Thyroid gland (tissue), 4 donors: ENCODE measurements at regions of chr11 and their contacts with region 1.

Region 1: GRCh38 chr11:73393479-73394380 is 17.5 kb downstream of the RELT start:
- DNase-seq: peak; percentile 75
- H3K4me3 ChIP-seq: no peak overlapping the region
- H3K27ac ChIP-seq: no peak overlapping the region
- H3K4me1 ChIP-seq: no peaks in the 10 kb centered on the region
- H3K27me3 ChIP-seq: no peaks in the 10 kb centered on the region
- CTCF ChIP-seq: peak; percentile 14 to 86 (median 78)
- POLR2A ChIP-seq: no peak

Region 2: DNA sequence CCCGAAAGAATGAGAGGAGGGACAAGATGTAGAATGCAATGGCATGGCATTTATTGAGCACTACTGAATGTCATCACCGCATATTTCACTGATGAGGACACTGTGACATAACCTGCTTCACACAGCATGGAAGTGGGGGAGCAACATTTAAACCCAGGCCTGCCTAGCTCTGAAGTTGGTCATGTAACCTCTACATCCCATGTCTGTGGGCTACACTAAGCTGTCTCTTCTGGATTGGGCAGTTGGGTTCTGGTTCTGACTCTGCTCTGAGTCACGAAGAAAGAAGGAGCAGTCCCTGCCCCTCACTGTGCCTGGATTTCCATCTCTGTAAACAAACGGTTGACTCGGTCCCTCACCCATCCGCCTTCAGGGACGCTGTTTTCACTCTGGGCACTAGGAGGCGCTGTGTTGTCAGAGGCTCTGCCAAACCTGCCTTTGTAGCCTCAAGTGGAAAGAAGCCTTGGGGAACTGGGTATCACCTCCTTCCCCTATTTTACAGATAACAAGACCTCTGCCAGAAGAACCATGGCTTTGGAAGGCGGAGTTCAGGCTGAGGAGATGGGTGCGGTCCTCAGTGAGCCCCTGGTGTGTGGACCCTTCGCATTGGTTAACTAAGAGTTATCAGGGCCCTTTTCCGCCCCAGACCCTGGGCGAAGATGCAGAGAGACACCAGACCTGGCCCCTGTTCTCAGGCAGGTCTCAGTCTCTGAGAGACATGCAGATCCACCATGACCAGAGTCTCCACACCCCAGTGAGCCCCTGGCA is 98.3 kb before region 1 on chr11:
- intact Hi-C with region 1: loop called (anchors 5 kb)
- DNase-seq: peak; percentile 63 to 71
- H3K4me3 ChIP-seq: no peak overlapping the region
- H3K27ac ChIP-seq: no peak overlapping the region
- H3K4me1 ChIP-seq: no peaks in the 10 kb centered on the region
- H3K27me3 ChIP-seq: no peaks in the 10 kb centered on the region
- CTCF ChIP-seq: peak; percentile 70 to 94 (median 81)
- POLR2A ChIP-seq: no peak

Region 3: DNA sequence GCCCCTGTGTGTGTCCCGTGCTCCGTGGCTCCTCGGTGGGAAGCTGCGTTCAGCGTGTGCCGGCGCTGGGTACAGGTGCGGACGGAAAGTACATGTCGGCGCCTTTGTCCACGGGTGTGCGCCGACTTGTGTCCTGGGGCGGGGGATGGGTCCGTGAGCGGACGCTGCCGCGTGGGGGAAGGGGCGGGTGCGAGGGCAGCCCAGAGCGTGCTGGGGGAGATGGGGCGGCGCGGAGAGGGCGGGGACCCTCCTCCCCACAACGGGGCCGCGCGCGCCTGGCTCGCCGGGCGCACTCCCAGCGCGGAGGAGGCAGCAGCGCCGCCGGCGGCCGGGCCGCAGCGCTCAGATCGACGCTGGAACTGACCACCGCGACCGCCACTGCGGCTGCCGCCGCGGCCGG is 51.1 kb before region 1 on chr11:
- intact Hi-C with region 1: loop called (anchors 5 kb)
- DNase-seq: peak; percentile 41 to 48
- H3K4me3 ChIP-seq: peak overlapping the region in 1 of 3 donors; percentile 25
- H3K27ac ChIP-seq: no peak overlapping the region
- H3K4me1 ChIP-seq: peaks cover 27 to 36% of the 10 kb centered on the region in 2 donors
- H3K27me3 ChIP-seq: no peaks in the 10 kb centered on the region
- CTCF ChIP-seq: peak in 1 of 6 experiments; percentile 26
- POLR2A ChIP-seq: no peak

Region 4: DNA sequence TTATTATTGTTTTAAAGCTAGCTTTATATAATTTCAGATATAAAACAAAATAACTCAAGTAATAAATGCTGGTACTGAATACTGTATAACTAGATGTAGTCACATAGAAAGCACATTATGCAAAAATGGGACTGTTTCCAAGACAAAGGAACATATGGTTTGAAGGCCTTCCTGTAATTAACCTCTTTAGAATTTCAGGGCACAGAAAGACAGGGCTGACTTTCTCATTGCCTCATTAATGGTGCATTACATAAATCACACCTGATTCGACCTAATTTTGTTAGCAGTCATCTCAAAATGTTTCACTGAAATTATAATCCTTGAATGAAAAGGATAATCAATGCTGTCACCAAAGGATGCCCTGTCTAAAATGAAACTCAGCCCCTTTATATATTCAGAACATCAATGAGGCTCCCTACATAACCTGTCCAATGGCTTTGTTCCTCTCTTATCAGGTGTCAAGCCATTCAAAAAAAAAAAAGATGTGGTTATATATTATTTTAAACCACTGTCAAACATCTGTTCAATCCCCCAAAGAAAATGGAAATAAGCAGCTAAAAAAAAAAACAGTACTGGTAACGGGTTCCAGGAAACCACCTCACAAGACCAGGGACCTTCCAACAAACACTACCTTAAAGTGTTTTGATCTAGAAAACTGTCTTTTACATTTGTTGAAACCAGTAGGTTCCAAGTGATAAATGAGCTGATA is 126.8 kb after region 1 on chr11:
- intact Hi-C with region 1: no loop called
- DNase-seq: no peak
- H3K4me3 ChIP-seq: no peak overlapping the region
- H3K27ac ChIP-seq: no peak overlapping the region
- H3K4me1 ChIP-seq: peaks cover 0 to 4% of the 10 kb centered on the region in 2 donors
- H3K27me3 ChIP-seq: no peaks in the 10 kb centered on the region
- CTCF ChIP-seq: no peak
- POLR2A ChIP-seq: no peak